ENCODE measurements at regions of chr11 and their contacts with region 1.

Region 1: DNA sequence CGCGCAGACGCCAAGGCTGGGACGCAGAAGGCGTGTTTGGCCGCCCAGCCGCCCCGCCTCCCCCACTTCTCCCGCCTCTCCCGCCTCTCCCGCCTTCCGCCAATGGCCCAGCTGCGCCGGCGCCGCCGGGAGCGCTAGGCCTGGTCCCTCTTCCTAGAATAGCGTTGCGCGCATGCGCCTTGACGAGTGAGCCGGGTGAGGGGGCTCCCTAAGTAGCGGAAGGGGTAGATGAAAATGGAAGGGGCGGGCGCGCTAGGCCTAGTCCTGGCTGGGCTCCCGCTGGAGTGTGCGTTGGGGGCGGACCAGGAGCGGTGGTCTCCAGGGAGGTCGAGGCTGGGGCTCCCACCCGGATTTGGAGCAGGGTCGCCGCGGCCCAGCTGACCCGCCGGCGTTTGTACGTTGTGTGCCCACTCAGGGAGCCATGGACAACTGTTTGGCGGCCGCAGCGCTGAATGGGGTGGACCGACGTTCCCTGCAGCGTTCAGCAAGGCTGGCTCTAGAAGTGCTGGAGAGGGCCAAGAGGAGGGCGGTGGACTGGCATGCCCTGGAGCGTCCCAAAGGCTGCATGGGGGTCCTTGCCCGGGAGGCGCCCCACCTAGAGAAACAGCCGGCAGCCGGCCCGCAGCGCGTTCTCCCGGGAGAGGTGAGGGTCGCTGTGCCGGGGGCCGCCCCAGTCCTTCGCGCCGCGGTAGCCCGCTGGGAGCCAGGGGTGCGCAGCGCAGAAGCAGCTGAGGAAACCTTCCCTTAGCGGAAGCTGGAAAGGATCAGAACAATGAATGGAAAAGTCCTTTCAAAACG is at the start of gene AKIP1:
- DNase-seq: peak; percentile 98
- total RNA-seq, gene AKIP1: 15.4 to 19.1 TPM

Region 2: GRCh38 chr11:8839957-8840945 is 71.0 kb before region 1 on chr11:
- intact Hi-C with region 1: loop called in 1 of 2 experiments (anchors 2 kb)
- DNase-seq: no peak

Region 3: DNA sequence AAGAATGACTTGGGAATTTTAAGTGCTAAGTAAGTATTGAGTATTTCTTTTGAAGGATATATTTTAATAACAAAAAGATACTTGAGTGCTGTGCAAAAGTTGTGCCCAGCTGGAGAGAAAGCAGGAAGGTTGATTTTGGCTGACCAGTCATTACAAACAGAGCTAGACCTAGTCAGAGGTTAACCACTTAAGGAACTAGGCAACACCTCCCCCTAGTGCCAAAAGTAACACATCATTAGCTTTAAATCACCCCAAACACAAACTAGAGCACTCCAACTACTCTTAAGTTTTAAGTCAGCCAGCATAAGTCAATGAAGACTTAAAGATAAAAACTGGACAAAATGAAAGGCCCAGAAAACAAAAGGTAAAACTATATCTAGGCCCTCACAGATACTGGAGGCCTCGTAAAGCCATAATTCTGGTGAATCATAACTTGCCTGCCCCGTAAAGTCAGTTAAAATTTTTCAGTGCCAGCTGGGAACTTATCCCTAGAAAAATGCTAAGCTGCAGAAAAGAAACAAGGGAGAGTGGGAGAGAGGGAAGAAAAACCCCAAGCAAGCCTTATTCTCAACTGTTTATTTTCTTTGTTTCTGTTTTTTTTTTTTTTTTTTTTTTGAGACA is 48.4 kb after region 1 on chr11:
- intact Hi-C with region 1: loop called in 1 of 2 experiments (anchors 5 kb)
- DNase-seq: no peak

Region 4: DNA sequence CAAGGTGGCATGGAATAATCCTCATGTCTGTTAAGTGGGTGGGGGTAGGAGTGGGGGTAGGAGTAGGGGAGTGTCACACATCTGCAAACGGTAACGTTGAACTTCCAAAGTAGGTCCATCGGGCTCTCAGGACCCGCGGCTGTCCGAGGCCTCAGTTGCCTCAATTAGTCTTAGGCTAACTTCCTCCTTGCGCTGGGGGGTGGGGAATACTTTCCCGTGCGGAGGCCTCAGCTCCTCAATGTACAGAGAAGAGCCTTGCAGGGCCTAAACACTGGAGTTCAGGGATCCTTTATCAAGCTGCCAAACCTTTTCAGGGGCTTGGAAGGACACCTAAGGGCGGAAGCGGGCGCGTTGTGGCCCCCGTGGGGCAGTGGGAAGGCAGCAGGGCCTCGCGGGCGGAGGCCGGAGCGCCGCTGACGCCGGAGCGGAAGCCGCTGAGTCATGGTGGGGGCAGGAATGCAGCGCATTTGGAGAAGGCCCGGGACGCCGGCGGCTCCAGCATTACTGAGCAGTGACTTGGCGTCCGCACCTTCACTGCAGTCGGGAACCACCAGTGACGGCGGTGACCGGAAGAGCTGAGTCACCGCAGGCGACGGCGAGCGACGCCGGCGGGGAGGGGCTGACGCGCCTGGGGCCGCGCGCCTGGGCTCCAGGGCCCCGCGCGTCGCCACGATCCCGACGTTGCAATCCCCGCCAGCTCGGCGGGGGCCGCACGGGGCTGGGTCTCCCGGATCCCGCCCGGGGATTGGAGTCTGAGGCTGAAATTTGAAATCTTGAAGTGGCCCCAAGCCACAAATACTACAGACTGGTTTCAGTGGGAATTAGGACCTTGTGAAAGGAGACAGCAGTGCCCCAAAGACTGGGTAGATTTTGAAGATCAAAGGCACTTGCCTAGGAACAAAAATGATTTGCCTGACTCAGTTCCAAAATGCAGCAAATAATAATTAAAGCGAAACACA is 453.0 kb after region 1 on chr11:
- intact Hi-C with region 1: no loop called
- DNase-seq: peak; percentile 99

Measured in posterior vena cava (tissue), 2 donors.